B cell (primary cell): ENCODE measurements at regions of chr19 and their contacts with region 1.

Region 1: GRCh38 chr19:19385108-19385899 is 20.2 kb upstream of the GATAD2A start:
- DNase-seq: peak; percentile 99
- ATAC-seq: peak; percentile 89
- H3K4me3 ChIP-seq: peak overlapping the region; percentile 21 to 88 (median 80)
- H3K4me3 Mint-ChIP-seq: peak overlapping the region; percentile 92
- H3K27ac ChIP-seq: peak overlapping the region; percentile 57 to 81
- H3K27ac Mint-ChIP-seq: peak overlapping the region; percentile 92
- H3K4me1 ChIP-seq: peaks cover 15 to 24% of the 10 kb centered on the region in 2 donors
- H3K4me1 Mint-ChIP-seq: peaks cover 46% of the 10 kb centered on the region
- H3K27me3 ChIP-seq: no peaks in the 10 kb centered on the region
- H3K27me3 Mint-ChIP-seq: no peaks in the 10 kb centered on the region
- CTCF ChIP-seq: no peak

Region 2: GRCh38 chr19:19366612-19367396 is 18.5 kb before region 1 on chr19:
- CTCF ChIA-PET with region 1: interaction called, 14 read pairs
- POLR2A ChIA-PET with region 1: interaction called, 6 read pairs
- intact Hi-C with region 1: loop called (anchors 2 kb)
- DNase-seq: peak; percentile 81
- ATAC-seq: peak; percentile 82
- H3K4me3 ChIP-seq: no peak overlapping the region
- H3K4me3 Mint-ChIP-seq: peak overlapping the region; percentile 42
- H3K27ac ChIP-seq: no peak overlapping the region
- H3K27ac Mint-ChIP-seq: peak overlapping the region; percentile 86
- H3K4me1 ChIP-seq: peaks cover 10 to 23% of the 10 kb centered on the region in 2 donors
- H3K4me1 Mint-ChIP-seq: peaks cover 15% of the 10 kb centered on the region
- H3K27me3 ChIP-seq: no peaks in the 10 kb centered on the region
- H3K27me3 Mint-ChIP-seq: no peaks in the 10 kb centered on the region
- CTCF ChIP-seq: peak; percentile 92

Region 3: GRCh38 chr19:19372656-19373416 is 12.5 kb before region 1 on chr19:
- CTCF ChIA-PET with region 1: no interaction called
- POLR2A ChIA-PET with region 1: interaction called, 8 read pairs
- intact Hi-C with region 1: loop called (anchors 1 kb)
- DNase-seq: peak; percentile 67
- ATAC-seq: peak; percentile 97
- H3K4me3 ChIP-seq: peak overlapping the region; percentile 14 to 49 (median 26)
- H3K4me3 Mint-ChIP-seq: peak overlapping the region; percentile 74
- H3K27ac ChIP-seq: peak overlapping the region; percentile 74 to 82
- H3K27ac Mint-ChIP-seq: peak overlapping the region; percentile 89
- H3K4me1 ChIP-seq: peaks cover 11 to 22% of the 10 kb centered on the region in 2 donors
- H3K4me1 Mint-ChIP-seq: peaks cover 8% of the 10 kb centered on the region
- H3K27me3 ChIP-seq: no peaks in the 10 kb centered on the region
- H3K27me3 Mint-ChIP-seq: no peaks in the 10 kb centered on the region
- CTCF ChIP-seq: no peak

Region 4: DNA sequence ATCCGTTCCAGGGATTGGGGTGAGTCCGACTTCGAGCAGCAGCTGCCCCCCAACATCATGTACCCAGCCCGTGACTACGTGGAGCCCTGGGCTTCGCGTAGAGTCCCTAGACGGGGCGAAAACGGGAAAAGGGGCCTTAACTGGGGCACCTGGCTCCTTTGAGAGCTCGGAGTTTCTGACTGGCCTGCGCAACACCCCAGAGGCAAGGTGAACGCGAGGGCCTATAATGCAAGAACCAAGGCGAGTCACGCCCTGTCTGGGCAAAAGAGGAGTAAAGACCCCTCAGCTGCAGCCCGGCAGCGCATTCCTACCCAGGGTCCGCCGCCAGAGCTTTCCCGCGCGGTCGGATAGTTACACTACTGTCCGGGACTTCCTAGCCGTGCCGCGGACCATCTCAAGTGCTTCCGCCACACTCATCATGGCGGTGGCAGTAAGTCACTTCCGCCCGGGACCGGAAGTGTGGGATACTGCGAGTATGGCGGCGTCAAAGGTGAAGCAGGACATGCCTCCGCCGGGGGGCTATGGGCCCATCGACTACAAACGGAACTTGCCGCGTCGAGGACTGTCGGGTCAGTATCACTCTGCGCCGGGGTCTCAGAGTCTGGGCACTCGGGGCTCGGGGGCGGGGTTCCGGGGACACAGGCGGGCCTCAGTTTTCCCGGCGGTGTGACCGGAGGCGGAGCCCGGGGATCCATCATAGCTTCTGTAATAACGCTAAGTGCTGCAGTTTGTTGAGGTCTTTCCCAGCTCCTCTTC is 130.6 kb after region 1 on chr19 and contains the start of gene NDUFA13:
- CTCF ChIA-PET with region 1: no interaction called
- POLR2A ChIA-PET with region 1: interaction called, 6 read pairs
- intact Hi-C with region 1: loop called (anchors 1 kb)
- DNase-seq: peak; percentile 96
- ATAC-seq: peak; percentile 94
- H3K4me3 ChIP-seq: peak within 1 kb of the TSS; percentile 82 to 99 (median 95)
- H3K4me3 Mint-ChIP-seq: peak within 1 kb of the TSS; percentile 93
- H3K27ac ChIP-seq: peak within 1 kb of the TSS; percentile 72 to 81
- H3K27ac Mint-ChIP-seq: peak within 1 kb of the TSS; percentile 92
- H3K4me1 ChIP-seq: peaks cover 12 to 23% of the 10 kb centered on the region in 2 donors
- H3K4me1 Mint-ChIP-seq: peaks cover 27% of the 10 kb centered on the region
- H3K27me3 ChIP-seq: no peaks in the 10 kb centered on the region
- H3K27me3 Mint-ChIP-seq: no peaks in the 10 kb centered on the region
- CTCF ChIP-seq: no peak
- total RNA-seq, gene NDUFA13: 170 and 188 TPM in 2 replicates